Heart right ventricle (tissue), 16 donors: ENCODE measurements at regions of chr2 and their contacts with region 1.

Region 1: DNA sequence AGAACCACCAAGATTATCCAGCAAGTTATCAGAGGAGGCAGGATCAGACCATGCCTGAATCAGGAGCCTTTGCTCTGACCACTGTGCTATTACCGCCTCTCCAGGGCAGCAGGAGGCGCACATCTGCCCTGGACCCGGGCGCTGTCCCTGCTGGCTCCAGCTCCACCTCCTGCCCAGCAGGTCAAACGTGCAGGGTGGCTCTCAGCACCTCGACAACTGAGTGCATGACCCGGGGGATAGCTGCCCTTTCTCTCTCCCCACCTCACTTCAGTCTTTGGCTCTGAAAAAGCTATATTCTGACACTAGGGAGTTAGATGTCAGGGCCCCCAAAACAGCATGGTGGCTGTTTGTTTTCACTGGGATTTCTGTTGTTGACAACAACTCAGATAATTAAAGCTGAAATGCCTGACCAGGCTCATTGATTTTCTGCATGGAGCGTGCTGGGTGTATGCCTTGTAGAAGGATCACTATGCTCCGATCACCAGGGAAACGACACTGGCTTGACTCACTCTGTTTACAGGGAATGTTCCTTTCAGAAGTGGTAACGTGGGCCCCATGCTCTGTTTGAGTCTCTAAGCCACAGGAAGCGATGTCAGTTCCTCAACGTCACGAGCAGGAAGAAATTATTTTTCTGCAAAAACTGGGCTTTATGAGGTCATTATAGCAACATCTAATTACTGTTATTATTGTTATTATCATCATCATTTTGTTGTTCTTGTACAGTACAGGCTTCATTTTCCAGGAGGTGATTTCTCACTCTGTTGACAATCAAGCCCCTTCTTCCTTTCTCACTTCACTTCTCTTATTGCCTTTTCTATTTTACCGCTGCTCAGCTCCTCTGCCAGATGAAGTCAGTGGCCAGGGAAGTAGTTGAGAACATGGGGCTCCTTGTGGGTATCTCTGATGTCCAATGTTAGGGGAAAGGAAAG is 125.6 kb downstream of the PLB1 start:
- DNase-seq: peak in 1 of 2 donors; percentile 84
- ATAC-seq: peak; percentile 70 to 94 (median 86)
- H3K4me3 ChIP-seq: peak overlapping the region in 1 of 10 donors; percentile 27
- H3K27ac ChIP-seq: peak overlapping the region; percentile 27 to 92 (median 72)
- H3K4me1 ChIP-seq: peaks cover 14 to 62% (median 44%) of the 10 kb centered on the region in 9 donors
- H3K27me3 ChIP-seq: no peaks in the 10 kb centered on the region
- CTCF ChIP-seq: peak in 7 of 9 donors; percentile 7 to 48 (median 38)

Region 2: DNA sequence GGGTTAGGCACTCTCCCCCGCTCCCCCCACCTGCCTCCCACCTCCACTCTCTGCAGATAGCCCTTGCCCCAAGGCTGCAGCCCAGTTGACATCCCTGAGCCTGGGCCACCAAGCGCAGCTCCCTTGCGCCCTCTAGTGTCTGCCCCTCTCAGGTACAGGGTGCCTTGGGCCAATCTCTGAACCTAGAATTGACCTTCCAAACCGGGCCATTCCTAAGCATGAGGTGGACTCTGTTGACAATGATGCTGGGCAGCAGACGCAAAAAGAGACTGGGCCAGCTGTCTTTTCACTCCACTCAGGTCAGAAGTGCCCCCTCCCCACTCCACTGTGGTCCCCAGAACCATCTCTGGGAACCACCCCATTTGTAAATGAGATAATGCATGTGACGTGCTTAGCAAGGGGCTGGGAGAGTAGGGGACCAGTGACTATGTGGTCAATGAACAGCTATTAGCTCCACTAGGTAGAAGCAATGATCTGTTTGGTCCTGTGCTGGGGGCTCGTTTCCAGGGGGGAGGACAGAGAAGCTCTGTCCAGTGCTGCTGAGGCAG is 168.8 kb before region 1 on chr2:
- intact Hi-C with region 1: no loop called
- DNase-seq: peak; percentile 66 to 77
- ATAC-seq: peak; percentile 82 to 91 (median 85)
- H3K4me3 ChIP-seq: no peak overlapping the region
- H3K27ac ChIP-seq: peak overlapping the region in 1 of 10 donors; percentile 10
- H3K4me1 ChIP-seq: peaks cover 0 to 34% (median 0%) of the 10 kb centered on the region in 9 donors
- H3K27me3 ChIP-seq: no peaks in the 10 kb centered on the region
- CTCF ChIP-seq: peak; percentile 72 to 93 (median 89)

Region 3: GRCh38 chr2:28661589-28662001 is 40.2 kb after region 1 on chr2:
- intact Hi-C with region 1: loop called in 1 of 10 experiments (anchors 5 kb)
- DNase-seq: peak; percentile 55 to 84
- ATAC-seq: peak; percentile 68 to 86 (median 82)
- H3K4me3 ChIP-seq: no peak overlapping the region
- H3K27ac ChIP-seq: peak overlapping the region; percentile 18 to 82 (median 64)
- H3K4me1 ChIP-seq: peaks cover 11 to 64% (median 57%) of the 10 kb centered on the region in 9 donors
- H3K27me3 ChIP-seq: no peaks in the 10 kb centered on the region
- CTCF ChIP-seq: peak in 1 of 9 donors; percentile 15